ENCODE measurements at regions of chr6 and their contacts with region 1.

Region 1: DNA sequence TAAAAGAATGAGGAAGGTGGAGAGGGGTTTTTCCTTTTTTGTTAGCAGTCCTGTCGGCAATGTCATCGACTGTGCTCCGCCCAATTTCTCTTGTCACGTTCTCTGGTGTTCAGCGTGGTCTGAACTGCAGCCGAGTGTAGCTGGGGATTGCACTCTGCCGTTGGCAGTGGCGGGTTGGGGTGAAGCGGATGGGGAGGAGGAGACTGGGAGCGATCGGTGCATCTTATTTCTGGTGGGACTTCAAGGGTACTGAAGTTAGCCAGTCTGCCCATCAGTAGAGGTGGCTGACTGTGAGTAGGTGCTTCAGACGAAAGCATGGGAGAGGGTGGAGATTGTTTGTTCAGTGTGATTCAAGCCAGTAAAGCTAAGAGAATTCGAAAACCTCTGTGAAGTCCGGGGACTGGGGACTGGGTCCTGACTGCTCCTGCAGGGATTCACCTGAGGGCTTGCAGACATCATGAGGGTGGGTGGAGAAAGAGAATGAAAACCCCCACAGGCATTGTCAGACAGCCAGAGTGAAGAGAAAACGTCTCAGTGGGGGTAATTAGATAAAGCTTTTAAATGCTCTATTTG is 5.1 kb downstream of the RREB1 start:
- DNase-seq: peak; percentile 31 to 77 (median 62)
- ATAC-seq: peak; percentile 79
- H3K4me3 ChIP-seq: peak overlapping the region; percentile 3
- H3K4me3 Mint-ChIP-seq: peak overlapping the region; percentile 63 to 92 (median 82)
- H3K27ac ChIP-seq: peak overlapping the region; percentile 82
- H3K27ac Mint-ChIP-seq: peak overlapping the region; percentile 65 to 94 (median 88)
- H3K4me1 ChIP-seq: peaks cover 9 to 59% of the 10 kb centered on the region in 2 donors
- H3K4me1 Mint-ChIP-seq: peaks cover 57 to 84% (median 78%) of the 10 kb centered on the region in 7 donors
- H3K27me3 ChIP-seq: no peaks in the 10 kb centered on the region
- H3K27me3 Mint-ChIP-seq: no peaks in the 10 kb centered on the region

Region 2: DNA sequence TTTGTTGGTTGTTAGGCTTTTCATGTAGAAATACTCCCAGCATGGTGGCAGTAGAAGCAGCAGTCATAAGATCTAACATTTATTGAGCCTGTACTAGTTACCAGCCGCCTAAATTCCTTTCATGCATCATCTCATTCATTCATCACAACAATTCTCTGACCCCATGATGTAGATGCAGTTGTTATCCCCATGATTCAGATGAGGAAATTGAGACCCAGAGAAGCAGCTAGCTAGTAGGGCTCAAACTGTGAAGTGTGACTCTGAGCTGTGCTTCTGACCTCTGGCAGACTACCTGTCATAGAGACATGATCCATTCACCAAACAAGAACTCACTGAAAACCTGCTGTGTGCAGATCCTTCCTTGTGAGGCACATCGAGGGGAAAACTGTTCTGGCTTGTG is 11.8 kb after region 1 on chr6:
- CTCF ChIA-PET with region 1: interaction called, 8 read pairs
- POLR2A ChIA-PET with region 1: interaction called, 99 read pairs
- intact Hi-C with region 1: loop called in 1 of 2 experiments (anchors 1 kb)
- DNase-seq: no peak
- ATAC-seq: no peak
- H3K4me3 ChIP-seq: no peak overlapping the region
- H3K4me3 Mint-ChIP-seq: peak overlapping the region in 5 of 10 donors; percentile 13 to 45 (median 15)
- H3K27ac ChIP-seq: no peak overlapping the region
- H3K27ac Mint-ChIP-seq: peak overlapping the region in 8 of 9 donors; percentile 11 to 88 (median 51)
- H3K4me1 ChIP-seq: peaks cover 7 to 33% of the 10 kb centered on the region in 2 donors
- H3K4me1 Mint-ChIP-seq: peaks cover 50 to 86% (median 74%) of the 10 kb centered on the region in 7 donors
- H3K27me3 ChIP-seq: no peaks in the 10 kb centered on the region
- H3K27me3 Mint-ChIP-seq: no peaks in the 10 kb centered on the region

Region 3: DNA sequence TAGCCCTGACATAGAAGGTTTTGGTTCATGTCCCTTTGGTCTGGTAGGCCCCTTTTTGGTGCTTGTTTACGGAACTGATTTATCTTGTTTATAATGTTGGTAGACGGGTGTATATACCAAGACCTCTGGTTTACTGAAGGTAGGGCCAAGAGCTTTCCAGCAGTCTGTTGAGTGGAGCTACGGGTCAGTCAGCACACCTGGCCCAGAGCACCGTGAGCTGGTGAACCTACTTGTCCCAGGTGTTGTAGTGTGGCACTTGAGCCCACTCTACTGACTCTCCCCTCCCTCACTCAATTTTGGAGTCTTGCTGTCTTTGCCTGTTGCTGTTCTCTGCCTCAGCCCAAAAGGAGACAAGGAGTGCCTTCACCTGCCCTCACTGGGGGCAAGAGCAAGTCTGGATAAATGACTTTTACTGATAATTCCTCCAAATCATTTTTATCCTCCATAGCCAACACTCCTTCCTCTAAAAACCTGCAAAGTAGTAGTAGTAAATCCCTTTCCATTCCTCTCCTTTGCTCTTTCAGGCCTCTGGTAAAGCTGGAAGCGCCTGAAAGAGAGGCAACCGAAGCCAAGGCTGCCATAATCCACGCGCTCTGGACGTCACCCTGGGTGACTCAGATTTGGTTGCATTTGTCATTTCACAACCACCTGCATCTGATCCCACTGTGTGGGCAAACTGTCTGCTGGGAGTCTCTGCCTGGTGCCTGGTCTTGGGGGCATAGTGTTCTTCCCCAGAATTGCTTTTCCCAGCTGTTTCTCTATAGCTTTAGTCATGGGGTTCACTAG is 17.1 kb after region 1 on chr6:
- CTCF ChIA-PET with region 1: interaction called, 8 read pairs
- POLR2A ChIA-PET with region 1: interaction called, 99 read pairs
- intact Hi-C with region 1: loop called in 1 of 2 experiments (anchors 1 kb)
- DNase-seq: no peak
- ATAC-seq: peak; percentile 71
- H3K4me3 ChIP-seq: no peak overlapping the region
- H3K4me3 Mint-ChIP-seq: peak overlapping the region in 9 of 10 donors; percentile 50 to 73 (median 68)
- H3K27ac ChIP-seq: peak overlapping the region; percentile 52
- H3K27ac Mint-ChIP-seq: peak overlapping the region; percentile 51 to 94 (median 90)
- H3K4me1 ChIP-seq: peaks cover 7 to 45% of the 10 kb centered on the region in 2 donors
- H3K4me1 Mint-ChIP-seq: peaks cover 65 to 96% (median 89%) of the 10 kb centered on the region in 7 donors
- H3K27me3 ChIP-seq: no peaks in the 10 kb centered on the region
- H3K27me3 Mint-ChIP-seq: no peaks in the 10 kb centered on the region

Region 4: DNA sequence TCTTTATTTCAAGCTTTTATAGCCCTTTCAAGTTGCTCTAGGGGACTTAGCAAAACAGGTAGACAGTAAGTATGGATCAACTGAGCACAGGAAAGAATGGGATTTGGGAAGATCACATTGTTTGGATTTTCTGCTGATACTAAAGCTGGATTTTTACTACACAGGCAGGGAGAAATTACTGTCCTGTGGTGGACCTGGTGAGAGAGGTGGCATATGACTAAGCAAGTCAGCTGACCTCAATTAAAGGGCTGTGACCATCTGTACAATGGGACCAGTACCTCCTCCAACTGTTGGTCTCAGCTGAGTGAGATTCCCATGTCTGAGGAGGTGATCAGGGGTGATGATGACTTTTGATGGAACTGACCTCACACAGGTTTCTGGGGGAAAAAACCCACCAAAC is 22.9 kb after region 1 on chr6:
- CTCF ChIA-PET with region 1: interaction called, 5 read pairs
- POLR2A ChIA-PET with region 1: interaction called, 99 read pairs
- intact Hi-C with region 1: loop called (anchors 1 kb)
- DNase-seq: no peak
- ATAC-seq: no peak
- H3K4me3 ChIP-seq: no peak overlapping the region
- H3K4me3 Mint-ChIP-seq: peak overlapping the region in 1 of 10 donors; percentile 23
- H3K27ac ChIP-seq: peak overlapping the region; percentile 91
- H3K27ac Mint-ChIP-seq: peak overlapping the region; percentile 25 to 98 (median 88)
- H3K4me1 ChIP-seq: peaks cover 16 to 50% of the 10 kb centered on the region in 2 donors
- H3K4me1 Mint-ChIP-seq: peaks cover 46 to 98% (median 88%) of the 10 kb centered on the region in 7 donors
- H3K27me3 ChIP-seq: no peaks in the 10 kb centered on the region
- H3K27me3 Mint-ChIP-seq: no peaks in the 10 kb centered on the region

Region 5: DNA sequence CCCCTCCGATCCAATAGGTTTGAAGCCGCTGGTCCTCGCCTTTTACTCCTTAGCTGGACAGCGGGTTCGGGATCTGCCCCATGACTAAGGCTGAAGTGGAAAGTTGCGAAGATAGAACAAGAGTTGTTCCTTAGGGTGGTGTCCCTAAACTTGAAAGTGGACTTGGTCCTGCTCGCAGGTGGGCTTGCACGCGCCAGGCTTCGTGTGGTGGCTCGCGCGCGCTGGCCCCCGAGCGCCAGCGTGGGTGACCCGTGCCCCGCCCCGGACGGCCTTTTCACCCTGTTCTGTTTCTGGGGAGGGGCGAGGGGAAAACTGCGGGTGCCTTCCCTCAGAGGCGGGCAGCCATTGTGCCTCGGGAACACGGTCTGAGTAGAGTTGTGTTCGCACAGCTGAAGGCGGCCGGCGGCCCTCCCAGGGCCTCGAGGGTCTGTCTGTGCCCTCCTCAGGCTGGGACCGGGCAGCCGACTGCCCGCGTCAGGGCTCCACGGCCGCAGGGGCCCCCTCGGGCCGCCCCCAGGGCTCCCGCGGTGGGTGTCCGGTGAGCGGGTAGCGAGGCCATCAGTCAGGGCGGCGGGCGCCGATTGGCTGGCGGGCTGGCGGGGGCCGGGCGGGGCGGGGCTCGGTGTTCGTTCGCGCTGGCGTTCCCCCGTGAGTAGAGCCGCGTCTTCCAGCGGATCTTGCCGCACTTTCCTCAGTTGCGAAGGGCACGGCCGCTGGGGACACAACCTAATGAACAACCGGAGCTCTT is 28.0 kb after region 1 on chr6:
- CTCF ChIA-PET with region 1: interaction called, 3 read pairs
- POLR2A ChIA-PET with region 1: interaction called, 73 read pairs
- intact Hi-C with region 1: loop called (anchors 1 kb)
- DNase-seq: peak; percentile 69 to 86 (median 78)
- ATAC-seq: peak; percentile 89
- H3K4me3 ChIP-seq: peak overlapping the region; percentile 73
- H3K4me3 Mint-ChIP-seq: peak overlapping the region; percentile 80 to 92 (median 88)
- H3K27ac ChIP-seq: peak overlapping the region; percentile 91
- H3K27ac Mint-ChIP-seq: peak overlapping the region; percentile 85 to 99 (median 96)
- H3K4me1 ChIP-seq: peaks cover 22 to 51% of the 10 kb centered on the region in 2 donors
- H3K4me1 Mint-ChIP-seq: peaks cover 45 to 91% (median 85%) of the 10 kb centered on the region in 7 donors
- H3K27me3 ChIP-seq: no peaks in the 10 kb centered on the region
- H3K27me3 Mint-ChIP-seq: no peaks in the 10 kb centered on the region

Region 6: GRCh38 chr6:7145885-7146828 is 33.3 kb after region 1 on chr6:
- CTCF ChIA-PET with region 1: no interaction called
- POLR2A ChIA-PET with region 1: interaction called, 23 read pairs
- intact Hi-C with region 1: loop called in 1 of 2 experiments (anchors 1 kb)
- DNase-seq: no peak
- ATAC-seq: peak; percentile 71
- H3K4me3 ChIP-seq: peak overlapping the region; percentile 10
- H3K4me3 Mint-ChIP-seq: peak overlapping the region; percentile 70 to 83 (median 82)
- H3K27ac ChIP-seq: peak overlapping the region; percentile 63
- H3K27ac Mint-ChIP-seq: peak overlapping the region; percentile 55 to 96 (median 89)
- H3K4me1 ChIP-seq: peaks cover 17 to 27% of the 10 kb centered on the region in 2 donors
- H3K4me1 Mint-ChIP-seq: peaks cover 50 to 89% (median 76%) of the 10 kb centered on the region in 7 donors
- H3K27me3 ChIP-seq: no peaks in the 10 kb centered on the region
- H3K27me3 Mint-ChIP-seq: no peaks in the 10 kb centered on the region

Region 7: DNA sequence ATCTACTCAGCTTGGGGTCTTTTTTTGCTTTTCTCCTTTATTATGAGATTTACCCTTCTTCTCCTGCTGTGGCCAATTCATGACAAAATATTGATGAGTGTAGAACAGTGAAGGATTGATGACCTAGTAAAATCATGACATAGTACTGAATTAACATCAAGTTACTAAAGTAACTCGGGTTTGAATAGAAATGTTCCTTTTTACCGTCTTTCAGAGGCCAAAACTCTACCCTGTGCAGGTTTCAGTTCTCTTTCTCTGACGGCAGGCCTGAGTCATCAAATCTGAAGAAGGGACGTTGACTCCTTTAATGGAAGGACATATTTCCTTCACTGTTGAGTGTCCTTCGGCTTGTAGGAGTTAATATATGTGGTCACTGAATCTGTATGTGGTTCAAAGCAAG is 75.7 kb after region 1 on chr6:
- CTCF ChIA-PET with region 1: no interaction called
- POLR2A ChIA-PET with region 1: interaction called, 3 read pairs
- intact Hi-C with region 1: loop called in 1 of 2 experiments (anchors 5 kb)
- DNase-seq: no peak
- ATAC-seq: peak; percentile 80
- H3K4me3 ChIP-seq: no peak overlapping the region
- H3K4me3 Mint-ChIP-seq: peak overlapping the region in 1 of 10 donors; percentile 29
- H3K27ac ChIP-seq: no peak overlapping the region
- H3K27ac Mint-ChIP-seq: peak overlapping the region in 1 of 9 donors; percentile 42
- H3K4me1 ChIP-seq: no peaks in the 10 kb centered on the region
- H3K4me1 Mint-ChIP-seq: peaks cover 2 to 10% (median 7%) of the 10 kb centered on the region in 7 donors
- H3K27me3 ChIP-seq: no peaks in the 10 kb centered on the region
- H3K27me3 Mint-ChIP-seq: no peaks in the 10 kb centered on the region

Measured in naive thymus-derived CD4-positive, alpha-beta T cell (primary cell).